Head of caudate nucleus (tissue), 42 donors: ENCODE measurements at regions of chr18 and their contacts with region 1.

Region 1: DNA sequence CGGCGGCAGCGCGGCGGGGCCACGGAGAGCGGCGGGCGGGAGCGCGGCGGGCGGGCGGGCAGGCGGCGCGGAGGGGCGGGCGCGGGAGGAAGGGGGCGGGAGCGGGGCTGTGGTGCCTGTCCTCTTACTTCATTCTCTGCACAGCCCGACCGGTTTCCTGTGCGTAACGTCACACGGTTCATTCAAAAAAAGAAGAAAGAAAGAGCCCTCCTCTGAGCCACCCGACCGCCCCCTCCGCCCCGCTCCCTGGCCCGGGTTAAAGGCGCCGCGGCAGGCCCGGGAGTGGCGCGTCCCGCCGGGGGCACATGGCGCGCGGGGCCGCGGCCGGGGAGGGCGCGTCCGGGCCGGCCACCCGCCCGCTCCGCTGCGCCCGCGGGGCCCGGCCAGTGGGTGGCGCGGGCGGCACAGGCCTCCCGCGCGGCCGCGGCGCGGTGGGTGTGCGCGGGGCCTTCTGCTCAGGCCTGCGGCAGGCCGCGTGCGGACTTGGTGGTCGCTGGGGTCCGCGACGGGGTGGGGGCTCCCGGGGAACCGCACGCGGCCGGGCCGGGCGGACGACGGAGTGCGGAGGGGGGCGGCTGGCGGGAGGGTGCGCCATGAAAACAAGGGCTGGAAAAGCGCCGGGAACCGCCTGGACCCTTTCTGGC is 599 bp upstream of the BCL2 start:
- DNase-seq: peak; percentile 64 to 94 (median 86)

Region 2: DNA sequence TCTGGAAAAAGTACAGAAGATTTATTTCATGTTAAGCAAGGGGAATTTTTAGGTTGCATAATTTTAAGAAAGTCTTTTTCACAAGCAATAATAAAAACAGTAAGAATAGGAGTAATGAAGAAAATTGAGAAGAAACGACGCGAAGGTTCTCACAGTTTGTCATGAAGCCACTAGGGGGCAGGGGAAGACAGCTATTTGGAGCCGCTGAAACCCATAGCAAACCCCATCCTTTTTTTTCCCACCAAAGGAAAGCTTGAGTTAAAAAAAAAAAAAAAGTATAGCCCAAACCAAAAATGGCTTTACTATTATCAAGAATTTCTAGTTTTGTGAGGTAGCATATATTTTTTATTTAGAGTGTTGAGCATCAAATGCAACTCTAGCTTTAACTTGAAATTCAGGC is 303.9 kb before region 1 on chr18:
- intact Hi-C with region 1: loop called (anchors 5 kb)
- DNase-seq: peak in 39 of 42 donors; percentile 31 to 87 (median 64)

Region 3: DNA sequence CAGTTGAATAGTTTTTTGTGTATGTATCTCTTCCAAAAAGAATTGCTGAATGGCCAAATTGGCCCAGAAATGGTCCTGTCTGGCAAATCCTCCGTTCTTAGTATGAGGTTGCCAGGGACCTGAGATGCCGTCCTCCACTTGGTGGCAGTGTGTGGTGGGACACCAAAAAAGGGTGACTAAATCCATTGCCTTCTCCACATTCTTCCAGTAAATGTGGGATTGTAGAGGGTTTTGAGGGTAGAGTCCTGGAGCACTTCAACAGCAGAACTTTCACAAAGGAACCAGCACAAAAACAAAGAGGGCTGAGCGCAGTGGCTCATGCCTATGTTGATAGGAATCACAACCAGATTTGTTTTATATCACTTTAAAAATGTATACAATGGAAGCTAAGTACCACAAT is 200.5 kb before region 1 on chr18:
- intact Hi-C with region 1: loop called (anchors 5 kb)
- DNase-seq: peak in 41 of 42 donors; percentile 39 to 85 (median 64)

Region 4: GRCh38 chr18:63367053-63367953 is 47.1 kb after region 1 on chr18 and contains the start of gene KDSR:
- intact Hi-C with region 1: loop called (anchors 5 kb)
- DNase-seq: peak; percentile 82 to 98 (median 94)